Naive thymus-derived CD4-positive, alpha-beta T cell (primary cell): ENCODE measurements at regions of chr15 and their contacts with region 1.

Region 1: GRCh38 chr15:33132722-33133345 is 61.7 kb downstream of the FMN1 start:
- DNase-seq: peak in 3 of 9 donors; percentile 6 to 27 (median 13)
- ATAC-seq: peak; percentile 62
- H3K4me3 ChIP-seq: no peak overlapping the region
- H3K4me3 Mint-ChIP-seq: peak overlapping the region in 4 of 10 donors; percentile 31 to 66 (median 62)
- H3K27ac ChIP-seq: no peak overlapping the region
- H3K27ac Mint-ChIP-seq: peak overlapping the region in 2 of 9 donors; percentile 39 to 74
- H3K4me1 ChIP-seq: no peaks in the 10 kb centered on the region
- H3K4me1 Mint-ChIP-seq: peaks cover 0 to 24% (median 13%) of the 10 kb centered on the region in 7 donors
- H3K27me3 ChIP-seq: no peaks in the 10 kb centered on the region
- H3K27me3 Mint-ChIP-seq: peaks cover 0 to 7% (median 0%) of the 10 kb centered on the region in 5 donors

Region 2: GRCh38 chr15:32659340-32660155 is 473.3 kb before region 1 on chr15:
- CTCF ChIA-PET with region 1: interaction called, 3 read pairs
- POLR2A ChIA-PET with region 1: no interaction called
- intact Hi-C with region 1: loop called in 1 of 2 experiments (anchors 2 kb)
- DNase-seq: no peak
- ATAC-seq: no peak
- H3K4me3 ChIP-seq: no peak overlapping the region
- H3K4me3 Mint-ChIP-seq: no peak overlapping the region
- H3K27ac ChIP-seq: no peak overlapping the region
- H3K27ac Mint-ChIP-seq: no peak overlapping the region
- H3K4me1 ChIP-seq: peaks cover 0 to 6% of the 10 kb centered on the region in 2 donors
- H3K4me1 Mint-ChIP-seq: peaks cover 4 to 24% (median 13%) of the 10 kb centered on the region in 7 donors
- H3K27me3 ChIP-seq: no peaks in the 10 kb centered on the region
- H3K27me3 Mint-ChIP-seq: no peaks in the 10 kb centered on the region

Region 3: DNA sequence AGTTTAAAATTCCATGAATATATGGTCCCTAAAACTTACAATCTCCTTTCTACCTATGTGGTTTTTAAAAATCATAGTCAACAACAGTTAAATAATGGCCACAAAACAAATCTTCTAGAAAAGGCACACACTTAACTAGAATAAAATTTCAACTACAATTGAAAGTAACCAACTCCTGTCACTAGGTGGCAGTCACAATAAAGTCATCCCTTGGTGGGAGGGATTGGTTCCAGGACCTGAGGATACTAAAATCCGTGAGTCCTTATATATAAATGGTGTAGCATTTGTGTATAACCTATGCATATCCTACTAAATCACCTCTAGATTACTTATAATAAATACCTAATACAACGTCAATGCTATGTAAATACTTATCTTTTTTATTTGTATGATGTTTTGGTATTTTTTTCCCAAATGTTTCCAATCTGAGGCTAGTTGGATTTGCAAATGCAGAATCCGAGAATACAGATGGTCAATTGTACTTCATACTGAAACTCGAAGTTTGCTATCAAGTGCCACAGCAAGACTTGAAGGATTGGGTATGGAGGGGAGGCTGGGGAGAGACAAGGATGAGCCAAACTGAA is 110.9 kb before region 1 on chr15:
- CTCF ChIA-PET with region 1: interaction called, 3 read pairs
- POLR2A ChIA-PET with region 1: no interaction called
- intact Hi-C with region 1: loop called (anchors 1 kb)
- DNase-seq: peak in 3 of 9 donors; percentile 1 to 37 (median 5)
- ATAC-seq: no peak
- H3K4me3 ChIP-seq: no peak overlapping the region
- H3K4me3 Mint-ChIP-seq: no peak overlapping the region
- H3K27ac ChIP-seq: no peak overlapping the region
- H3K27ac Mint-ChIP-seq: peak overlapping the region in 1 of 9 donors; percentile 57
- H3K4me1 ChIP-seq: no peaks in the 10 kb centered on the region
- H3K4me1 Mint-ChIP-seq: peaks cover 0 to 35% (median 4%) of the 10 kb centered on the region in 7 donors
- H3K27me3 ChIP-seq: no peaks in the 10 kb centered on the region
- H3K27me3 Mint-ChIP-seq: peaks cover 0 to 6% (median 0%) of the 10 kb centered on the region in 5 donors

Region 4: DNA sequence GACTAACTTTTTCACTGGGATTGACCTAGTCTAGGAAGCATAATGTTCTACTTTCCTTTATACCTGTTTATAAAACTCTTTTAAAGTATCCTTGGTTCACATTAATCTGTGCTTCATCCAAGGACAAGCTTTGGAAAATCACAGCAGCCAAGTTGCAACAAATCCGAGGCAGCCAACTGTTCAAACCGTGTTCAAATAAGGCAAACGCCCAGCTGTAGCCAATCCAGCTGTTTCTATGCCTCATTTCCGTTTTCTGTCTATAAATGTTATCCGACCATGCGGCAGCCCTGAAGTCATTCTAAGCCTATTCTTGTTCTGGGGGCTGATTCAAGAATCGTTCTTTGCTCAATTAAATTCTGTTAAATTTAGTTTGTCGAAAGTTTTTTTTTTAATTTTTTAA is 16.6 kb before region 1 on chr15:
- CTCF ChIA-PET with region 1: no interaction called
- POLR2A ChIA-PET with region 1: no interaction called
- intact Hi-C with region 1: no loop called
- DNase-seq: no peak
- ATAC-seq: no peak
- H3K4me3 ChIP-seq: no peak overlapping the region
- H3K4me3 Mint-ChIP-seq: no peak overlapping the region
- H3K27ac ChIP-seq: no peak overlapping the region
- H3K27ac Mint-ChIP-seq: no peak overlapping the region
- H3K4me1 ChIP-seq: no peaks in the 10 kb centered on the region
- H3K4me1 Mint-ChIP-seq: peaks cover 0 to 1% (median 0%) of the 10 kb centered on the region in 7 donors
- H3K27me3 ChIP-seq: no peaks in the 10 kb centered on the region
- H3K27me3 Mint-ChIP-seq: peaks cover 0 to 17% (median 7%) of the 10 kb centered on the region in 5 donors

Region 5: DNA sequence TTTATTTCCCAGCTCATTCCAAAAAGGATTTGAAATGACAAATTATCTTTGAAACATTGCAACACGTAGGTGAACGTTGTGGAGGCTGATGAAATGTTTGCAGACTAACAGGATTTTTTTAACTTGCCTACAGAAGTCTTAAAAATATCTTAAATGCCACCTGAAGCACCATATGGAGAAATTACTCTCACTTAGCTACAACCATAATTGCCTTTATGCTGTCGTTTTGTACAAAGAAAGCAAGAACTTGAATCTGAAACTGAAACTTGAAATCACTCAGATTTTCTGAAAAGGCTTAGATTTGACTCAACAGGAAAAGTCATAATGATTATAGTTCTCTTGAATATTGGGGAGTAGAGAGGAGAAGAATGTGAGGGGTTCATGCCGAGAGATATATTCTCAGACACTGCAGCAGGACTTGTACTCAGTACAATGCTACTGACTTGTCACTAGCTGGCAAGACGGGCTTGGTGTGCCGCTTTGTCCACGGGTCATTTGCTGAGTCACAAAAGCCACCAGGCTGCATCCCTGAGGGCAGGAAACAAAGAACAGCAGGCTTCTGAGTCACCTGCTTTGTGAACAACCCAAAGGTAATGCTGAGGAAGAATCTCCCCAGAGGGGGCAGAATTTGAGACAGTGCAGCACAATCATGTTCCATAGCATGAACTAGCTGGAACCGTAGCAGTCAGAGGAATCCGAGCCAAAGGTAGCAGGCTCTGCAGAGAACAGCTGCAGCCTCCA is 68.8 kb after region 1 on chr15:
- CTCF ChIA-PET with region 1: interaction called, 4 read pairs
- POLR2A ChIA-PET with region 1: no interaction called
- intact Hi-C with region 1: loop called in 1 of 2 experiments (anchors 2 kb)
- DNase-seq: peak in 8 of 9 donors; percentile 3 to 67 (median 19)
- ATAC-seq: peak; percentile 88
- H3K4me3 ChIP-seq: peak overlapping the region; percentile 43
- H3K4me3 Mint-ChIP-seq: peak overlapping the region; percentile 34 to 79 (median 74)
- H3K27ac ChIP-seq: peak overlapping the region; percentile 36
- H3K27ac Mint-ChIP-seq: peak overlapping the region; percentile 5 to 89 (median 74)
- H3K4me1 ChIP-seq: peaks cover 0 to 4% of the 10 kb centered on the region in 2 donors
- H3K4me1 Mint-ChIP-seq: peaks cover 0 to 30% (median 14%) of the 10 kb centered on the region in 7 donors
- H3K27me3 ChIP-seq: no peaks in the 10 kb centered on the region
- H3K27me3 Mint-ChIP-seq: peaks cover 0 to 12% (median 0%) of the 10 kb centered on the region in 5 donors

Region 6: GRCh38 chr15:33226559-33227181 is 93.8 kb after region 1 on chr15:
- CTCF ChIA-PET with region 1: no interaction called
- POLR2A ChIA-PET with region 1: no interaction called
- intact Hi-C with region 1: loop called in 1 of 2 experiments (anchors 5 kb)
- DNase-seq: peak in 7 of 9 donors; percentile 4 to 84 (median 78)
- ATAC-seq: peak; percentile 99
- H3K4me3 ChIP-seq: no peak overlapping the region
- H3K4me3 Mint-ChIP-seq: peak overlapping the region in 4 of 10 donors; percentile 11 to 62 (median 53)
- H3K27ac ChIP-seq: no peak overlapping the region
- H3K27ac Mint-ChIP-seq: peak overlapping the region in 5 of 9 donors; percentile 61 to 76 (median 74)
- H3K4me1 ChIP-seq: peaks cover 7 to 16% of the 10 kb centered on the region in 2 donors
- H3K4me1 Mint-ChIP-seq: peaks cover 0 to 27% (median 19%) of the 10 kb centered on the region in 7 donors
- H3K27me3 ChIP-seq: no peaks in the 10 kb centered on the region
- H3K27me3 Mint-ChIP-seq: peaks cover 0 to 14% (median 0%) of the 10 kb centered on the region in 5 donors